Posterior vena cava (tissue), 2 donors: ENCODE measurements at regions of chr11 and their contacts with region 1.

Region 1: DNA sequence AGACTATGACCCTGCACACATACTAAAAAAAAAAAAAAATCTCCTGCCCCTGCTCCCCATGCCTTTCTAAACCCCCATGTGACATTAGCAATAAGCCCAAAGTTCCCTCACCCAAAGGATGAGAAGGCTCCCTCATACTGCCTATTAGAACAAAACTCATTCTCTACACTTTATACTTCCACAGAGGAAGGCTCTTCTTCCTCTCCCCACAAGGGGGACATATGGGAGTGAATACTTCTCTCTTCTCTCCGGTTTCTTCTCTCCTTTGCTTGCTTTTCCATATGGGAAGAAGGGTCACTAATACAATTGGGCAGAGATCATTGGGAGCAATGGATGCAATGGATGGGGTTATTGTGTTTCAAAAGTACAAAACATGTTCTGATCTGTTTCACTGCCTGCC is 3.3 kb downstream of the OR52L1 start:
- DNase-seq: no peak

Region 2: GRCh38 chr11:4916581-4916980 is 1066.9 kb before region 1 on chr11:
- intact Hi-C with region 1: loop called in 1 of 2 experiments (anchors 5 kb)
- DNase-seq: no peak